ENCODE measurements at regions of chr17 and their contacts with region 1.

Region 1: DNA sequence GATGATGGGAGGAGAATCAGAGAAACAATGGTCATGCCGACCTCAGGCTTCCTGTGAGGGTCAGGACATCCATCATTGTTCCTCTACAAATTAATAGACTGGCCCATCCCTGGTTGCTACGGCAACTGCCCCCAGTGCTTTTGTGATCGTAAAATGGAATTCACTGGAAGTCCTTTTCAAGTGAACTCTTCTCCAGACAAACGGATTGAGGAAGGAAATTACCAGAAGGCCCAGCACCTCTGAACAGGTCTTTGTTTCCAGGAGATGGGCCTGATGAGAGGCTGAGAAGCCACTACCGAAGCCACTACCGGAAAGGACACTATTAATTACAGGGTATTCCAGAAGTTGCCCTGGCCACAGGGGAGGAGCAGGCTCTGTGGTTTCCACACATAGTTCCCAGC is 126.0 kb downstream of the MGAT5B start:
- DNase-seq: no peak
- H3K4me3 ChIP-seq: no peak overlapping the region
- H3K27ac ChIP-seq: no peak overlapping the region
- H3K4me1 ChIP-seq: no peaks in the 10 kb centered on the region
- H3K27me3 ChIP-seq: no peaks in the 10 kb centered on the region
- CTCF ChIP-seq: no peak

Region 2: DNA sequence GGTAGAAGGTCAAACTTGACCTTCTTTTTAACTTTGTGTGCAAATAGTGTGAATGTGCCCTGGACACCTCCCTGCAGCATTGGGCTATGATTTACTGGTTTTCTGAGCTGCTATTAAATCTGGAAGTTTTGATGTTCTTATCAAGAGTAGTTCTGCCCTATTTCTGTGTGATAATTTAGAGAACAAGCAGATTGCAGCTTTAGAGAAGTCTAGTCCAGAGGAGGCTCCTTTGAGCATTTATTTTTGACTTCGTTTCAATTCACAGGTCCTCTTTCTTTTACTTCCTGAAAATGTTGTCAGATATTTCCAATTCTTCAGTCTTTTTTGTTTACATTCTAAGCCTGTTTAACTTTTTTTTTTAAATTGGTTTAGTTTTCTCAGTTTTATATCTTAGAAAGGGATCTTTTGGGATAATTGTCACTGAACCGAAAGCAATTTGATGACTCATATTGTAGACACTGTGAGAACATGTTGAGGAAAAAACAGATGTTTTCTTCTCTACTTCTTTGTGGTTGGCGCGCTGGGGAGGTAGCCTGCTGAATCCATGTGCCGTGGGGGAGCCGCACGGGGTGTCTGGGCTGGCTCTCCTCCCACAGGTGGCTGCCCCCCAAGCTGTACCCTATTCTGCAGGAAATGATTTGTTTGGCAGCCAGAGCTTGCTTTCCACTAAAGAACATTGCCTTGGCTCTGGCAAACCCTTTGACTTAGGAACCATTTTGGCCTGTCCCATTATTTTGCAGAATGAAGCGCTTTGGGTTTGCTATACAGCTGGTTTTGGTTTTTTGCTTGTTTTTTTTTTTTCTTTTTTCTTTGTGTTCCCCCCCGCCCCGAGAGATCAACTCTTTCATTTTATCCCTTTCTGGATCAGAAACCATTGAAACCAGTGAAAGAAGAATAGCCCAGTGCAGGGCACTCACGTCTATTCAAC is 202.9 kb before region 1 on chr17:
- CTCF ChIA-PET with region 1: no interaction called
- dilution Hi-C with region 1: no loop called
- in situ Hi-C with region 1: no loop called
- intact Hi-C with region 1: no loop called
- DNase-seq: peak; percentile 65
- H3K4me3 ChIP-seq: peak overlapping the region in 1 of 3 experiments; percentile 11
- H3K27ac ChIP-seq: no peak overlapping the region
- H3K4me1 ChIP-seq: peaks cover 6% of the 10 kb centered on the region
- H3K27me3 ChIP-seq: no peaks in the 10 kb centered on the region
- CTCF ChIP-seq: no peak

Region 3: GRCh38 chr17:76909971-76910760 is 84.1 kb before region 1 on chr17:
- CTCF ChIA-PET with region 1: no interaction called
- dilution Hi-C with region 1: loop called (anchors 5 kb)
- in situ Hi-C with region 1: no loop called
- intact Hi-C with region 1: no loop called
- DNase-seq: peak; percentile 44
- H3K4me3 ChIP-seq: no peak overlapping the region
- H3K27ac ChIP-seq: no peak overlapping the region
- H3K4me1 ChIP-seq: no peaks in the 10 kb centered on the region
- H3K27me3 ChIP-seq: no peaks in the 10 kb centered on the region
- CTCF ChIP-seq: no peak